MCF 10A (cell line): ENCODE measurements at regions of chr1 and their contacts with region 1.

Region 1: DNA sequence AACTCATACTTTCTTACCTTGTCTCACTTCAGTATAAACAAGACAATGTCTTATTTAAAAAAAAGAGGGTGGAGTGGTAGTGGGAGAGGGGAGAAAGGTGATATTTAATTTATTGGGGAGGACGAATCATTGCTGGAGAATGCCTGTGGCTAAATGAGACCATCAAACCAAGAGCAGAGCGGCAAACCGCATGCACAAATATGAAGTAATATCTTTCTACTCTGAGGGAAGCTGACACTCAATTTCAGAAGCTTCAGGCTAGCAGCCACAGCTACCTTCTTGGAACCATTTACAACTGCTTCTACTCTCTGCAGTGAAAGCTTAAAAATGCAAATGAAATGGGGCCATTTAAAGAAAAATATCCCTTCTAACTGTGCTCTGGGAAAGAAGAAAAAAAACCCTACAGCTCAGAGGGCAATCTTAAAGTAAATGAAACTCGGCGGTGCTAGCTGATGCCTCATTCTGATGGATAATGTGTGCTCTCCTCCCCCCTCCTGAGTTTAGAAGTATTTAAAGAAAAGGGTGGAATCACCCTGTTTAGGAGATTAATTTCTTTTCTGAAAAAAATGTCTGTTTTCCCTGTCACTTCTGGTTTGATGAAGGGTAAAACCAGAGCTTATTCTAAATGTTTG is 178.2 kb upstream of the CAMK1G start:
- DNase-seq: peak; percentile 81
- H3K4me3 Mint-ChIP-seq: peak overlapping the region; percentile 17
- H3K27ac Mint-ChIP-seq: no peak overlapping the region
- H3K4me1 Mint-ChIP-seq: peaks cover 16% of the 10 kb centered on the region
- H3K27me3 Mint-ChIP-seq: no peaks in the 10 kb centered on the region
- CTCF ChIP-seq: no peak

Region 2: DNA sequence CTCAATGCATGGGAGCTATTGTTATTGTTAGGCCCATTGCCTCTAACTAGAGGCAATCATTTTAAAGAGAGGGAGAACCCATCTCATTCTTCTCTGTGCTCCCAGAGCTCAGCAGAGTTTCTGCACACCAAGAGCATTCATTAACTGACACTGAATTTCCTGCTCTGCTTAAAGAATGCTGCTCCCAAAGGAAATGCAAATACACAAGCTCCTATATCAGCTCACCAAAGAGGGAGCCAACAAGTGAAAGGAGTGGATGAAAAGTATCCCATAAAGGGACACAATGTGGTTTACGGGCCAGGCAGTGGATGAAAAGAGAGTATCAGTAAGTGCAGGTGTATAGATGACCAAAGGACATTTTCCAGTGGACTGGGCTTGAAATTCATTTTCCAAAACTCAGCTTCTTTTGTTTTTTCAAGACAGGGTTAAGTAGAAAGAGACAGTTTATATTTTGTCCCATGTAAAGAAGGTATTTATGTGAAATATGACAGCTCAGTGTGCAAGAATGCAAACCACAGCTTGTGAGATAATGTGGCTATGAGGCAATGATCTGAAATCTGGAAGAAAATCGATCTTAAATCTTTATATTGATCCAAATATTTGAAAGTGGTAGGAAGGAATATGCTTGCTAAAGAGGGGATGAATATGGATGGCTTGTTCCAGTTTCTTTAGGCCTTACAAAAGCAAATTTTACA is 29.5 kb before region 1 on chr1:
- CTCF ChIA-PET with region 1: interaction called, 10 read pairs
- POLR2A ChIA-PET with region 1: interaction called, 6,956 read pairs
- intact Hi-C with region 1: no loop called
- DNase-seq: no peak
- H3K4me3 Mint-ChIP-seq: no peak overlapping the region
- H3K27ac Mint-ChIP-seq: peak overlapping the region; percentile 84
- H3K4me1 Mint-ChIP-seq: peaks cover 69% of the 10 kb centered on the region
- H3K27me3 Mint-ChIP-seq: no peaks in the 10 kb centered on the region
- CTCF ChIP-seq: no peak

Region 3: GRCh38 chr1:209389258-209389657 is 16.0 kb before region 1 on chr1:
- CTCF ChIA-PET with region 1: interaction called, 65 read pairs
- POLR2A ChIA-PET with region 1: interaction called, 6,956 read pairs
- intact Hi-C with region 1: no loop called
- DNase-seq: peak; percentile 99
- H3K4me3 Mint-ChIP-seq: peak overlapping the region; percentile 22
- H3K27ac Mint-ChIP-seq: peak overlapping the region; percentile 79
- H3K4me1 Mint-ChIP-seq: peaks cover 45% of the 10 kb centered on the region
- H3K27me3 Mint-ChIP-seq: no peaks in the 10 kb centered on the region
- CTCF ChIP-seq: no peak